Mammary epithelial cell (primary cell): ENCODE measurements at regions of chr2 and their contacts with region 1.

Region 1: DNA sequence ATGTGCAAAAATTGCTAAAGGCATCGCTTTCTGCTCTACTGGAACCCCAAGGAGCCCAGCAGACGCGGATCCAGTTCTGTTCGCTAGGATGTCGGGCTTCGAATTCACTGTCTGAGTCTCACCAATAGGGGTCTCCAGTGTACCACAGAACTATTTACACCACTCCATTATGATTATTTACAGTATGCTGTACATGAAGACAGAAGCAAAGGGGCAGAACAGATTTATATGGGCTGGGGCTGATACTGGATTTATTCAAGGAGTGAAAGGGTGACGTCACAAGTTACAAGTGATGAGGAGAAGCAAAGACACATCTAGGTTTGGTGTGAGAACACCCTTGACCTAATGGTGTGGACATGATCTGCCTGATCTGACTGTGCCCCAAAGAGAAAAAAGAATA is 185.3 kb upstream of the ATP5MC3 start:
- DNase-seq: peak; percentile 24
- H3K4me3 ChIP-seq: no peak overlapping the region
- H3K27ac ChIP-seq: no peak overlapping the region
- H3K4me1 ChIP-seq: no peaks in the 10 kb centered on the region
- H3K27me3 ChIP-seq: peaks cover 7% of the 10 kb centered on the region
- CTCF ChIP-seq: peak; percentile 81 to 83

Region 2: GRCh38 chr2:175256889-175257585 is 109.8 kb before region 1 on chr2:
- CTCF ChIA-PET with region 1: no interaction called
- dilution Hi-C with region 1: no loop called
- in situ Hi-C with region 1: no loop called
- intact Hi-C with region 1: no loop called
- DNase-seq: no peak
- H3K4me3 ChIP-seq: no peak overlapping the region
- H3K27ac ChIP-seq: no peak overlapping the region
- H3K4me1 ChIP-seq: no peaks in the 10 kb centered on the region
- H3K27me3 ChIP-seq: no peaks in the 10 kb centered on the region
- CTCF ChIP-seq: no peak

Region 3: DNA sequence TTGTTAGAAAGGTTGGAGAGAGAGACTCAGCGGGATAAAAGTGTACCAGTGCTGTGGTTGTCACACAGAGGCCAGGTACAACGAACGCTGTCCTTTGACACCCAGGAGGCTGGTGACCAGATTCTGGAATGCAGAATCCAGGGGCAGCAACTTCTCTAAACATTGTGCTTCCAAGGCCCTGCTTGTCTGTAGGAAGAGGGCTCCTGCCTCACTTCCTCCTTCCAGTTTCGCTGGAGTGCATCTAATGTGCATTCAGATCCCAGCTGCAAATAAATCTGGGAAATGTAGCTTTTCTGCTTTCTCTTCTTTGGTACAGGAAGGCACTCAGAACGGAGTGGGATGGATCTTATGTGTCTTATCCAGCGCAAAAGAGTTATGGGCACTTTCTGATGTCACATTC is 13.5 kb before region 1 on chr2:
- CTCF ChIA-PET with region 1: no interaction called
- dilution Hi-C with region 1: no loop called
- in situ Hi-C with region 1: no loop called
- intact Hi-C with region 1: no loop called
- DNase-seq: no peak
- H3K4me3 ChIP-seq: no peak overlapping the region
- H3K27ac ChIP-seq: no peak overlapping the region
- H3K4me1 ChIP-seq: no peaks in the 10 kb centered on the region
- H3K27me3 ChIP-seq: peaks cover 2% of the 10 kb centered on the region
- CTCF ChIP-seq: no peak

Region 4: GRCh38 chr2:175662335-175662734 is 295.5 kb after region 1 on chr2:
- CTCF ChIA-PET with region 1: no interaction called
- dilution Hi-C with region 1: no loop called
- in situ Hi-C with region 1: loop called in 1 of 2 experiments (anchors 25 kb)
- intact Hi-C with region 1: no loop called
- DNase-seq: no peak
- H3K4me3 ChIP-seq: no peak overlapping the region
- H3K27ac ChIP-seq: no peak overlapping the region
- H3K4me1 ChIP-seq: no peaks in the 10 kb centered on the region
- H3K27me3 ChIP-seq: no peaks in the 10 kb centered on the region
- CTCF ChIP-seq: no peak